A673 (cell line): ENCODE measurements at regions of chr10 and their contacts with region 1.

Region 1: DNA sequence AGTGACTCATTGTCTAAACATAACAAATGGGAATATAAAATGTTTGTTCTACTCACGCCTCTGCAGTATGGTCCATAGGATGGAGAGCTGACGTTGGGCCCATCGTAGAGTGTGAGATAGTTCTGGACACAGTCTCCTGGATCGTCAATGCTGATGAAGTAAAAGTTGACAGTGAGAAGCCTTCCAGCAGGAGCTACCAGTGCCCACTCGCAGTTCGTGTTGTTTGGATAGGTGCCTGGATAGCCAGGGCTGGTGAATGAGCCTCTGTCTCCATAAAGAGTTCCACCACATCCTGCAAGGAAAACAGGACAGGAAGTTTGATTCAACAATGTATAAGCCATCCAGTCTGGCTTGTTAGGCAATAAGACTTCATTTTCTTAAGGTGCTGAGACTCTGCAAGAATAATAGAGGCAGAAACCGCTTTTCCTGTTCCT is 79.6 kb downstream of the OR13A1 start:
- DNase-seq: no peak
- H3K4me3 ChIP-seq: no peak overlapping the region
- H3K27ac ChIP-seq: no peak overlapping the region
- H3K4me1 ChIP-seq: no peaks in the 10 kb centered on the region
- H3K27me3 ChIP-seq: peaks cover 7% of the 10 kb centered on the region
- CTCF ChIP-seq: no peak

Region 2: GRCh38 chr10:45008524-45009161 is 227.2 kb before region 1 on chr10:
- CTCF ChIA-PET with region 1: no interaction called
- POLR2A ChIA-PET with region 1: no interaction called
- intact Hi-C with region 1: loop called (anchors 5 kb)
- DNase-seq: peak; percentile 94
- H3K4me3 ChIP-seq: no peak overlapping the region
- H3K27ac ChIP-seq: no peak overlapping the region
- H3K4me1 ChIP-seq: peaks cover 3% of the 10 kb centered on the region
- H3K27me3 ChIP-seq: no peaks in the 10 kb centered on the region
- CTCF ChIP-seq: peak; percentile 89

Region 3: GRCh38 chr10:45034301-45034700 is 201.5 kb before region 1 on chr10:
- CTCF ChIA-PET with region 1: no interaction called
- POLR2A ChIA-PET with region 1: no interaction called
- intact Hi-C with region 1: no loop called
- DNase-seq: no peak
- H3K4me3 ChIP-seq: no peak overlapping the region
- H3K27ac ChIP-seq: no peak overlapping the region
- H3K4me1 ChIP-seq: no peaks in the 10 kb centered on the region
- H3K27me3 ChIP-seq: no peaks in the 10 kb centered on the region
- CTCF ChIP-seq: no peak

Region 4: GRCh38 chr10:45464958-45465567 is 229.2 kb after region 1 on chr10:
- CTCF ChIA-PET with region 1: no interaction called
- POLR2A ChIA-PET with region 1: no interaction called
- intact Hi-C with region 1: loop called (anchors 2 kb)
- DNase-seq: peak; percentile 78
- H3K4me3 ChIP-seq: no peak overlapping the region
- H3K27ac ChIP-seq: no peak overlapping the region
- H3K4me1 ChIP-seq: no peaks in the 10 kb centered on the region
- H3K27me3 ChIP-seq: no peaks in the 10 kb centered on the region
- CTCF ChIP-seq: peak; percentile 90

Region 5: DNA sequence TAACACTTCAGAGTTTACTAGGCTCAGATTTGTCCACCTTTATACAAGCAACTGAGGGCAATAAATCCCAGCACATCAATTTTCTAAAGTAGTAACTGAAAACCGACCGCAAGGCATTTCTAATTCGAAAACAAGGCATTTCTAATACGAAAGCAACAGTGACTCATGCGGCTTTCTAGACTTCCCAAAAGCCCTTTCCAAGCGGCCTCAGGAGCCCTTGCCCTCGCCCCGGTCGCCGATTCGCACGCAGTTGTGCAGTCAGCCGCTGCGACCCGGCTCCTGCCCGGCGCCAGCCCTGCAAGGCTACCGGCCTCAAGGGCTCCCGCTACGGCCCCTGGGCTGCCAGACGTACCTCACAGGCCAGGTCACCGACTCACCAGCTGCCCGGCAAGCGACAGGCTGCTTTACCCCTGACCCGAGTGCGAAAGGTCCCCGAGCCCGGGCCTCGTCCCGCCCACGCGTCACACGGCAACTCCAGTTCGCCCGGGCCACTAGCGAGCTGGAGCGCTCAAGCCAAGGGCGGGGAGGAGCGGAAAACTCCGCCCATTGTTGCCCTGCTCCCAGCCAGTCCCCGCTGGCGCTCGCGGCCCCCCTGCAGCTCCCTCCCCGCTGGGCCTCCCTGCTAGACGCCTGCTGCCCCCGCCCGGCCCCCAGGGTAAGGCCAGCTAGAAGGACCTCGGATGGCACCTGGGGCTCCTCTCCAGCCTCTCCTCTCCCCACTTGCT is 787.3 kb after region 1 on chr10:
- CTCF ChIA-PET with region 1: no interaction called
- POLR2A ChIA-PET with region 1: no interaction called
- intact Hi-C with region 1: loop called (anchors 10 kb)
- DNase-seq: peak; percentile 82
- H3K4me3 ChIP-seq: peak overlapping the region; percentile 79
- H3K27ac ChIP-seq: peak overlapping the region; percentile 77
- H3K4me1 ChIP-seq: peaks cover 4% of the 10 kb centered on the region
- H3K27me3 ChIP-seq: no peaks in the 10 kb centered on the region
- CTCF ChIP-seq: 0 out of 2 replicates have a peak, but pooled peaks have one; percentile 32